ENCODE measurements at regions of chr14 and their contacts with region 1.

Region 1: GRCh38 chr14:59067127-59067894 is 121.2 kb upstream of the DAAM1 start:
- DNase-seq: no peak
- ATAC-seq: peak; percentile 61
- H3K4me3 ChIP-seq: no peak overlapping the region
- H3K27ac ChIP-seq: no peak overlapping the region
- H3K4me1 ChIP-seq: no peaks in the 10 kb centered on the region
- H3K27me3 ChIP-seq: no peaks in the 10 kb centered on the region
- CTCF ChIP-seq: no peak
- EP300 ChIP-seq: no peak
- POLR2A ChIP-seq: no peak
- RAD21 ChIP-seq: no peak

Region 2: DNA sequence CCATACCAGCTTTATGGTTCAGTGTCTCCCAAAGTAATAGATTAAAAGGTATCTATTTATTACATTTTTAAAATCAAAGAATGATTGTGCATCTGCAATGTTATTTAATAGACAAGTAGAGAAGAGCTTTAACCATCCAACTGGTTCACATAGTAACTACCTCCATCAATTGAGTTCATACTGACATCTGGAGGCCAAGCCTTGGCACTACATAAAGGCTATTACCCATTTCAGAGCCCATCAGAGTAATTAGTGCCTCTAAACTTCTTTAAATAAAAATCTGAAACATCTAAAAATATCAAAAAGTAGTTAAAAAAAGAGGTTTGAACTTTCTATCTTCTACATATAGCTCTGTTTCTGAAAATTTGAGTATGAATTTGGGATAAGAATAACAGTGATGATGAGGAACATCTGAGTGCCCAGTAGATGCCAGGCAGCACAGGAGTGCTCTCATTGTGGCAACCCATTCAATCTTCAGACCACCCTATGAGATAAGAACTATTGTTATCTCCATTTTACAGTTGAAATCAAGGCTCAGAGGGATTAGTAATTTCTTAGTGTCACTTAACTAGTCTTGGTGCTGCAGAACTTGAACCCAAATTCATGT is 11.8 kb before region 1 on chr14:
- CTCF ChIA-PET with region 1: interaction called, 13 read pairs
- POLR2A ChIA-PET with region 1: no interaction called
- RAD21 ChIA-PET with region 1: no interaction called
- SMC1A ChIA-PET with region 1: interaction called, 3 read pairs
- in situ Hi-C with region 1: no loop called
- intact Hi-C with region 1: no loop called
- DNase-seq: peak; percentile 7
- ATAC-seq: peak; percentile 97
- H3K4me3 ChIP-seq: no peak overlapping the region
- H3K27ac ChIP-seq: no peak overlapping the region
- H3K4me1 ChIP-seq: no peaks in the 10 kb centered on the region
- H3K27me3 ChIP-seq: no peaks in the 10 kb centered on the region
- CTCF ChIP-seq: peak; percentile 67 to 85 (median 74)
- EP300 ChIP-seq: no peak
- POLR2A ChIP-seq: no peak
- RAD21 ChIP-seq: peak; percentile 90

Region 3: GRCh38 chr14:59116984-59117415 is 49.7 kb after region 1 on chr14:
- CTCF ChIA-PET with region 1: no interaction called
- POLR2A ChIA-PET with region 1: no interaction called
- RAD21 ChIA-PET with region 1: no interaction called
- SMC1A ChIA-PET with region 1: interaction called, 3 read pairs
- in situ Hi-C with region 1: no loop called
- intact Hi-C with region 1: loop called (anchors 5 kb)
- DNase-seq: peak; percentile 44
- ATAC-seq: peak; percentile 95
- H3K4me3 ChIP-seq: no peak overlapping the region
- H3K27ac ChIP-seq: no peak overlapping the region
- H3K4me1 ChIP-seq: no peaks in the 10 kb centered on the region
- H3K27me3 ChIP-seq: no peaks in the 10 kb centered on the region; a peak in 1 of 4 replicates
- CTCF ChIP-seq: no peak
- EP300 ChIP-seq: peak; percentile 18 to 79; a peak in 3 of 4 replicates
- POLR2A ChIP-seq: no peak
- RAD21 ChIP-seq: no peak

Region 4: DNA sequence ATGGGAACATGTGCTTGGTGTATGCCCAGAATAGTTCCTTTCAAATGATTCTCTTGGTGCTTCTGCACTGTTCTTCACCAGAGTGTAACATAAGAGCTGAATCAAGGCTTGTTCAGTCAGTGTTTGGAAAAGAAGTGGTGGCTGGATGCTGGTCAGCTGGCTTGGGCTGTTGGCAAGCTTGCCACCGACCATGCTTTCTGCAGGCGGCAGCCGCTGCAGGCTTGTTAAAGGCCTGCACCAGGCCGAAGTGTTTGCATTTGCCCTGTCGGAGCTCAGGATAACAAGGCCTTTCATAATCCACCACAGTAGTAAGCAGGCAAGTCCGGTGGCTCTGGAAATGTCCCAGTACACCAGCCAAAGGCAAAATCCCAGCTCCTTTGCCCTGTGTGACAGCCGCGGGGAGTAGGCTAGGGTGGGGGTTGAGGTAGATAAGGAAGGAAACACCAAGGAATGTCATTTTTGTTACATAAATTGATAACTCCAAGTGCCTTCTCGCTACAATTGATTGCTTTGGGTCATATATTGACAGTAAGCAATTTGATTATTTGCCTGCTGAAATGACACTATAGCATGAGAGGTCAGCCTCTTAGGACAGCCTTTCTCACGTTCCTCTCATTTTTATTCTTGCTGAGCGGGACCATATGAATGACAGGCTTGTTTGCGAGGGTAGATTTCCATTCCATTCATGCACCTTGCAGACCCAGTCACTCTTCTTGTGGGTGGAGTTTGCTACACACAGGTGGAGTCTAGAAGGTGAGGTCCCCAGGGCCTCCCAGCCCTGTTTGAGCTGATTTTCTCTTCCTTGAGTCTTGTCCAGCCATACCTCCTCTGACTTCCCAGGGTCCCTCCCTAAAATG is 148.2 kb after region 1 on chr14:
- CTCF ChIA-PET with region 1: no interaction called
- POLR2A ChIA-PET with region 1: no interaction called
- RAD21 ChIA-PET with region 1: no interaction called
- SMC1A ChIA-PET with region 1: no interaction called
- in situ Hi-C with region 1: no loop called
- intact Hi-C with region 1: no loop called
- DNase-seq: no peak
- ATAC-seq: peak; percentile 19
- H3K4me3 ChIP-seq: 0 out of 2 replicates have a peak overlapping the region, but pooled peaks have one; percentile 11
- H3K27ac ChIP-seq: peak overlapping the region; percentile 59
- H3K4me1 ChIP-seq: peaks cover 15% of the 10 kb centered on the region
- H3K27me3 ChIP-seq: no peaks in the 10 kb centered on the region
- CTCF ChIP-seq: no peak
- EP300 ChIP-seq: no peak
- POLR2A ChIP-seq: no peak
- RAD21 ChIP-seq: no peak

Region 5: DNA sequence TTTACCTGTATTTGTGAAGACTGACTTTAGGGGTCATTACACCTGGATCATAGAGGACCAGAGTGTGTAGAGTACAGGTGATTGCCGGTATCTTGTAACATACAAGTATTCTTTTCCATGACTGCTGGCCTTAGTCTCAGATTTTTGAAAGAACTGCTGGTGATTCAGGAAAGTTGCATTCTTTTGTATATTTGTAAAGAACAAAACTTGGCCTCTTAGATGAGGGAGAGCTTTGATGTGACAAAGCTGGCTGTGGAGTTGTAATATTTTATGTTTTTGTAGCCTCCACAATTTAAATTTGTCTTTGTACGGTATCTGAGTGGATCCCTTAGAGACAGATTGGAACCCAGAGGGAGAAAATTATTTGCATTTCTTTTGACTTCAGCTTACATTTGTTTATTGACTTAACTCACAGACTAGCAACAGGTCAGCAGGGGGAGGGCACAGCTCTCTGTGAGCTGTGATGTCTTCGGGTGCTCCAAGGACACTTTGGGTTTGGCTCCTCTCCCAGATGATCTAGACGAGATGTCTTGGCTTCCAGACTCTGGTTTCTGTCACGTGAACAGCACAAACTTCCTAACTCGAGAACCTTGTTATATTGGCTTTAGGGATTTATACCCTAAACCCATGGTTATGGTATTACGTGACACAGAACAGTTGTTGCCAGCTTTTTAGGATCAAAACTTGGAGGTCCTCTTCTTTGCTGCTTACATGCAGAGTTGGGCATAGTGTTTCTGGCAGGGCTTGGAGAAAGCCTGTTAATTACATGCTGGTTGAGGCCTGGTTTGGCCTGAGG is 187.0 kb after region 1 on chr14:
- CTCF ChIA-PET with region 1: no interaction called
- POLR2A ChIA-PET with region 1: no interaction called
- RAD21 ChIA-PET with region 1: no interaction called
- SMC1A ChIA-PET with region 1: no interaction called
- in situ Hi-C with region 1: no loop called
- intact Hi-C with region 1: no loop called
- DNase-seq: no peak
- ATAC-seq: peak; percentile 47
- H3K4me3 ChIP-seq: no peak overlapping the region
- H3K27ac ChIP-seq: no peak overlapping the region
- H3K4me1 ChIP-seq: peaks cover 15% of the 10 kb centered on the region
- H3K27me3 ChIP-seq: no peaks in the 10 kb centered on the region
- CTCF ChIP-seq: no peak
- EP300 ChIP-seq: no peak
- POLR2A ChIP-seq: no peak
- RAD21 ChIP-seq: no peak